Activated CD4-positive, alpha-beta memory T cell treated with anti-CD3 and anti-CD28 coated beads, Interleukin-2, amount 10 ng/mL, durations not matched to agents 7 days and 5 days (primary cell): ENCODE measurements at regions of chr1 and their contacts with region 1.

Region 1: GRCh38 chr1:214637722-214638458 is 34.9 kb downstream of the CENPF start:
- DNase-seq: peak; percentile 33
- H3K4me3 Mint-ChIP-seq: no peak overlapping the region
- H3K27ac Mint-ChIP-seq: peak overlapping the region; percentile 55
- H3K4me1 Mint-ChIP-seq: peaks cover 27% of the 10 kb centered on the region
- H3K27me3 Mint-ChIP-seq: no peaks in the 10 kb centered on the region

Region 2: DNA sequence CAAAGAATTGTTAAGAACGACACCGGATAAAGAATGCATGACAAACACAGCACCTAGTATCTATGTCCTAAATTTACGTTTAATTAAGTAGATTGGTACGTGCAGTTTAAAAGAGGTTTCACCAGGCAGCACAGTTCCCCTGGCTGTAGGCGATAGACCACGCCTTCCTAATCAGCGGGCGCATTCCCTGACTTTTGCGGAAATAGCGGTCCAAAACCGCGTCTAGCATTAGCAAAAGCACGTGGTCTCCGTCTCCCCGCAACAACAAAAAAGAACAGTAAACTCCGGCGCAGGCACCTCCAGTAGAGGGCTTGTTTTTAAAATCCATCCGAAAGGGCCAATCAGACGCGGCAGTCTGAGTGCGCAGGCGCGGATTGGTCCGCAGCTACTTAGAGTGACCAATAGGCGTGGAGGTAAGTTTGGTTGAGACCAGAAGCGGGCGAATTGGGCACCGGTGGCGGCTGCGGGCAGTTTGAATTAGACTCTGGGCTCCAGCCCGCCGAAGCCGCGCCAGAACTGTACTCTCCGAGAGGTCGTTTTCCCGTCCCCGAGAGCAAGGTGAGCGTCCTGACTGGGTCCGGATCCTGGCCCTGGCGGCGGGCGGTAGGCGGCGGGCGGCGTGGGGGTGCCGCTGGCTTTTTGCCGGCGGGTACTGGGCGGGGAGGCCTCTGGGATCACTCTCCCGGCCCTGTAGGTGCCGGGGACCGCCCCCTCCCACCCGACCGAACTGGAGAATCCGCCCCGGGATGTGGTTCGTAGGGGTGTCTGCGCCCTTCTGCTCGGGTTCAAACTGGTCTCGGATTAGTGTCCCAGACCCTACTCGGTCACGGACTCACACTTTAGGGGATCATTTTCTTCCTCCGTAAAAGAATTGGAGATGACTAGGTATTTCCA is 34.9 kb before region 1 on chr1 and contains the start of gene CENPF:
- CTCF ChIA-PET with region 1: interaction called, 14 read pairs
- POLR2A ChIA-PET with region 1: interaction called, 3 read pairs
- DNase-seq: peak; percentile 97
- H3K4me3 Mint-ChIP-seq: peak within 1 kb of the TSS; percentile 85
- H3K27ac Mint-ChIP-seq: peak within 1 kb of the TSS; percentile 87
- H3K4me1 Mint-ChIP-seq: peaks cover 24% of the 10 kb centered on the region
- H3K27me3 Mint-ChIP-seq: no peaks in the 10 kb centered on the region
- total RNA-seq, gene CENPF: 125 to 135 TPM

Region 3: GRCh38 chr1:214648801-214649200 is 10.9 kb after region 1 on chr1:
- CTCF ChIA-PET with region 1: interaction called, 21 read pairs
- POLR2A ChIA-PET with region 1: interaction called, 3 read pairs
- DNase-seq: no peak
- H3K4me3 Mint-ChIP-seq: no peak overlapping the region
- H3K27ac Mint-ChIP-seq: no peak overlapping the region
- H3K4me1 Mint-ChIP-seq: peaks cover 4% of the 10 kb centered on the region
- H3K27me3 Mint-ChIP-seq: no peaks in the 10 kb centered on the region